K562 (cell line): ENCODE measurements at regions of chr2 and their contacts with region 1.

Region 1: DNA sequence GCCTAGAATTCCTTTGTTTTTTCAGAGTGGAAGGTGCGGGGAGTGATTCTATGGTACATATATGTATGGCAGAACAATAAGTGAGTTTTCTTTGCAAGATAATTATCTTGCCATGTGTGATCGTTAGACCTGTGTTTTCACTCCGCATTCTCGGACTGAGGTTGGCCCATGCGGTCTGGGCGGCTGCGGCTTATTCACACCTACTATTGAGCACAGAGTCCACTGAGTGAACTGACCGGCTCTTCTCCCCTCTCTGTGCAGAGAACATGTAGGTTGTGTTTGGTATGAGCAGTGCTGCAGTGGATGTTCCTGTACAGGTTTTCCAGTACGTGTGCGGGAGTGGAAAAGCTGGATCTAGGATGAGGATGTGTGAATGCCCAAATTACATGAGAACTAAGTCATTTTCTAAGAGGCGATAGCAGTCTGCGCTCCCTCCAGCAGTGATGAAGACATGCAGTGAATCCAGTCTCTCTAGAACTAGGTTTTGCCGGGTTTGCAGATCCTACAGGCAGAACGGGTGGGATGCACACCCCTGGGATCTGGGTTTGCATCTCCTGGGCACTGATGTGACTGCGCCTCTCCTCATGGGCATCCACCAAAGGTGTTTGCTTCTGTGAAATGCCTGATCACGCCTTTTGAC is 27.1 kb downstream of the MTERF4 start:
- DNase-seq: no peak
- ATAC-seq: no peak
- H3K4me3 ChIP-seq: no peak overlapping the region
- H3K27ac ChIP-seq: no peak overlapping the region
- H3K4me1 ChIP-seq: peaks cover 0 to 13% of the 10 kb centered on the region in 2 experiments; a peak in 2 of 5 replicates
- H3K27me3 ChIP-seq: peaks cover 7 to 25% of the 10 kb centered on the region in 2 experiments; a peak in 3 of 5 replicates
- CTCF ChIP-seq: no peak
- EP300 ChIP-seq: no peak
- POLR2A ChIP-seq: no peak
- RAD21 ChIP-seq: no peak

Region 2: GRCh38 chr2:241217320-241218031 is 142.5 kb after region 1 on chr2:
- CTCF ChIA-PET with region 1: no interaction called
- POLR2A ChIA-PET with region 1: no interaction called
- in situ Hi-C with region 1: no loop called
- intact Hi-C with region 1: loop called (anchors 5 kb)
- DNase-seq: peak; percentile 71 to 89 (median 88)
- ATAC-seq: peak; percentile 85
- H3K4me3 ChIP-seq: peak overlapping the region; percentile 40
- H3K27ac ChIP-seq: peak overlapping the region; percentile 51; the same call in 2 of the 3 replicates
- H3K4me1 ChIP-seq: peaks cover 2 to 25% of the 10 kb centered on the region in 2 experiments; a peak in 3 of 5 replicates
- H3K27me3 ChIP-seq: peaks cover 0 to 26% of the 10 kb centered on the region in 2 experiments; a peak in 3 of 5 replicates
- CTCF ChIP-seq: no peak
- EP300 ChIP-seq: no peak
- POLR2A ChIP-seq: no peak
- RAD21 ChIP-seq: no peak